ENCODE measurements at regions of chr11 and their contacts with region 1.

Region 1: DNA sequence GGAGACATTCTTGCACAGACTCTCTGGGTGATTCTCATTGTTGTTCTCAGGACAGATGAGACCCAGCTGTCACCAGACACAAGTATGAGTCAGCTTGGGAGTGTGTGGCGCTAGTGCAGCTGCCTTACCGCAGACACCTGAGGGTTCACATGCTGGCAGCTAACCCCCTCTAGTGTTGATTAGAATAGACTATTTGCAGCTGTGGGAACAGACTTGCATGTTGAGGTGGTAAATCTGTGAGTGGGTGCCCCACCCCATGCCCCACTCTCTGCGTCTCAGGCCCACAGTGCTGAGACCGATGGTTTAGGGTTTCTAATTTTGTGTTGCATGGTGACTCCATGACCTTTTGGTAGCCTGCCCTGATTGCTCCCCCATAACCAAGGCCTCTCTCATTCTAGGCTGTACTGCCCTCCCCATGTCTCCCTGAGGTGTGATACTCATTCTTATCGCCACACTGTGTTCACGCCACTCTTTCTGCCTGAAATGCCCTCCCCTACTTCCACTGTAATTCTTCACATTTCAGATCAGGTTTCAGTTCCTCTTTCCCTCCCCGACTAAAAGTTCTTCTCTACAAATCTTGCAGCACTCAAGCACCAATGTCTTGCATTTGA is 73.7 kb upstream of the KIRREL3 start:
- DNase-seq: peak; percentile 59 to 67
- H3K4me3 ChIP-seq: no peak overlapping the region
- H3K4me3 Mint-ChIP-seq: no peak overlapping the region
- H3K27ac Mint-ChIP-seq: no peak overlapping the region
- H3K4me1 ChIP-seq: no peaks in the 10 kb centered on the region
- H3K4me1 Mint-ChIP-seq: no peaks in the 10 kb centered on the region
- H3K27me3 ChIP-seq: no peaks in the 10 kb centered on the region; the same call in 1 of the 2 replicates
- H3K27me3 Mint-ChIP-seq: peaks cover 21% of the 10 kb centered on the region
- CTCF ChIP-seq: peak; percentile 60 to 79

Region 2: GRCh38 chr11:127017482-127017881 is 56.8 kb before region 1 on chr11:
- CTCF ChIA-PET with region 1: no interaction called
- POLR2A ChIA-PET with region 1: no interaction called
- intact Hi-C with region 1: loop called (anchors 1 kb)
- DNase-seq: peak; percentile 48 to 50
- H3K4me3 ChIP-seq: no peak overlapping the region
- H3K4me3 Mint-ChIP-seq: no peak overlapping the region
- H3K27ac Mint-ChIP-seq: no peak overlapping the region
- H3K4me1 ChIP-seq: no peaks in the 10 kb centered on the region
- H3K4me1 Mint-ChIP-seq: no peaks in the 10 kb centered on the region
- H3K27me3 ChIP-seq: no peaks in the 10 kb centered on the region
- H3K27me3 Mint-ChIP-seq: peaks cover 35% of the 10 kb centered on the region
- CTCF ChIP-seq: peak; percentile 42 to 78